Dorsolateral prefrontal cortex (tissue), 120 donors: ENCODE measurements at regions of chr19 and their contacts with region 1.

Region 1: GRCh38 chr19:51777570-51778462 is 16.8 kb downstream of the FPR2 start:
- DNase-seq: peak; percentile 37 to 67 (median 63)
- H3K4me3 ChIP-seq: peak overlapping the region in 23 of 59 donors; percentile 2 to 43 (median 29)
- H3K27ac ChIP-seq: peak overlapping the region in 1 of 59 donors; percentile 40
- H3K27me3 ChIP-seq: peaks cover 0 to 37% (median 9%) of the 10 kb centered on the region in 45 donors
- CTCF ChIP-seq: peak; percentile 54 to 93 (median 81)

Region 2: GRCh38 chr19:51422053-51422448 is 355.8 kb before region 1 on chr19:
- intact Hi-C with region 1: loop called in 1 of 2 experiments (anchors 5 kb)
- DNase-seq: peak; percentile 53 to 79 (median 64)
- H3K4me3 ChIP-seq: peak overlapping the region in 9 of 59 donors; percentile 19 to 41 (median 26)
- H3K27ac ChIP-seq: no peak overlapping the region
- H3K27me3 ChIP-seq: peaks cover 0 to 37% (median 7%) of the 10 kb centered on the region in 45 donors
- CTCF ChIP-seq: peak; percentile 61 to 100 (median 95)

Region 3: GRCh38 chr19:51473009-51473707 is 304.7 kb before region 1 on chr19:
- intact Hi-C with region 1: loop called in 1 of 2 experiments (anchors 5 kb)
- DNase-seq: peak; percentile 46 to 80 (median 66)
- H3K4me3 ChIP-seq: no peak overlapping the region
- H3K27ac ChIP-seq: no peak overlapping the region
- H3K27me3 ChIP-seq: peaks cover 0 to 44% (median 10%) of the 10 kb centered on the region in 45 donors
- CTCF ChIP-seq: peak; percentile 64 to 96 (median 90)

Region 4: GRCh38 chr19:51531349-51532315 is 246.2 kb before region 1 on chr19 and contains the start of gene SIGLEC6:
- intact Hi-C with region 1: no loop called
- DNase-seq: peak in 6 of 10 donors; percentile 33 to 66 (median 40)
- H3K4me3 ChIP-seq: no peak within 1 kb of the TSS
- H3K27ac ChIP-seq: no peak within 1 kb of the TSS
- H3K27me3 ChIP-seq: peaks cover 0 to 66% (median 23%) of the 10 kb centered on the region in 45 donors
- CTCF ChIP-seq: no peak
- total RNA-seq, gene SIGLEC6: 0.25 to 1.5 (median 0.62) TPM in 27 of 120 experiments, not detected in the others

Region 5: GRCh38 chr19:51593969-51594773 is 183.6 kb before region 1 on chr19:
- intact Hi-C with region 1: no loop called
- DNase-seq: peak; percentile 99 to 100 (median 99)
- H3K4me3 ChIP-seq: peak overlapping the region; percentile 50 to 98 (median 80)
- H3K27ac ChIP-seq: peak overlapping the region in 56 of 59 donors; percentile 23 to 96 (median 85)
- H3K27me3 ChIP-seq: peaks cover 0 to 8% (median 0%) of the 10 kb centered on the region in 45 donors
- CTCF ChIP-seq: peak in 31 of 56 donors; percentile 1 to 58 (median 34)

Region 6: GRCh38 chr19:51651216-51651846 is 126.5 kb before region 1 on chr19:
- intact Hi-C with region 1: loop called in 1 of 2 experiments (anchors 10 kb)
- DNase-seq: no peak
- H3K4me3 ChIP-seq: no peak overlapping the region
- H3K27ac ChIP-seq: peak overlapping the region in 1 of 59 donors; percentile 6
- H3K27me3 ChIP-seq: peaks cover 0 to 7% (median 0%) of the 10 kb centered on the region in 45 donors
- CTCF ChIP-seq: no peak

Region 7: DNA sequence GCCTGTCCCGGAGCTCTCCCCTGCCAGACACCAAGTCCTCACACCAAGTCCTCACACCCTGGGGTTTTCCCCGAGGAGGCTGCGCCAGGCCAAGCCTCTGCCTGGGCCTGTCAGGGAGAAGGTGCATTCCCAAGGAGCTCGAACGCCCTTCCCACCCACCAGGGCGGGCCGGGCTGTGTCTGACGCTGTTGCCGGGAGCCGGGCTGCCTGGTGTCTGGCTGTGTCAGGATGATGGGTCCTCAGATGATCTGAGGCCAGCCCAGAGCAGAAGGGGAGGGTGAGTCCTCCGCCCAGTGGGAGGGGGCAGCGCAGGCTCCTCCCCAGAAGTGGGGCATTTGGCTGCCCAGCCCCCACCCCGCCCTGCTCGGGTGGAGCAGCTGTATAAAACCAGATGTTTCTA is 51.8 kb before region 1 on chr19:
- intact Hi-C with region 1: loop called in 1 of 2 experiments (anchors 10 kb)
- DNase-seq: peak in 9 of 10 donors; percentile 53 to 85 (median 80)
- H3K4me3 ChIP-seq: peak overlapping the region in 30 of 59 donors; percentile 6 to 57 (median 32)
- H3K27ac ChIP-seq: peak overlapping the region in 58 of 59 donors; percentile 13 to 97 (median 82)
- H3K27me3 ChIP-seq: peaks cover 0 to 36% (median 0%) of the 10 kb centered on the region in 45 donors
- CTCF ChIP-seq: peak in 4 of 56 donors; percentile 11 to 21 (median 16)

Region 8: GRCh38 chr19:51873097-51873496 is 95.3 kb after region 1 on chr19:
- intact Hi-C with region 1: no loop called
- DNase-seq: no peak
- H3K4me3 ChIP-seq: no peak overlapping the region
- H3K27ac ChIP-seq: no peak overlapping the region
- H3K27me3 ChIP-seq: no peaks in the 10 kb centered on the region
- CTCF ChIP-seq: no peak

Region 9: DNA sequence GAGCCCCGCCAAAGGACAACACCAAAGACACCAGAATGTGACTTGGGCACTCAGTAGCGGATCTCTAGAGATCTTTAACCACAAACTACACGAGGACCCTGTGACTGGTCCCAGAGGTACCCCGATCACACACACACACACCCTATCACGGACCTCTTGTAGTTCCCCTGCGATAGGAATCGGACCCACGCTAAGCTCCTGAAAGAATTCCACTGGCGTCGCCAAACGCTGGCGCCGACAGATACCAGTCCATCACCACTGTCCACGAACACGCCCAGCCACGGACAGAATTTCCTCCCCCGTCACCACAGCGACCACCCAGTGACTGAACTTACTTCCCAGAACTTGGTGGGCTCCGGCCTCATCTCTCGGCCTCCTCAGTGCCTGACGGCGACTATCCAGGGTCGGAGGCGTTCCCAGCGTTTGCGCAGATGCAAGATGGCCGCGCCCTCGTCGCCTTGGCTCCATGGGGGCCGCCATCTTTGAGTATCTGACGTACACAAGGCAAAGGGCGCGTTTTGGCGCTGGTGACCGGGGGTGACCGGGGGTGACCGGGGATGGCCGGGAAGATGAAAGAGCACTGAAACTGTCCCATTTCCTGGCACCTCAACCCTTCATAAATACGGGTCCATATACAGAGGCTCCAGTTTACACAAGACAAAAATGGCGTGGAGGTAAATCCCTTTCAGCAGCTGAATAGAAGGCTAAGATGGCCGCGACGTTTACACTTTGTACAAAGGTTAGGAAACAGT is 230.2 kb after region 1 on chr19 and contains the start of gene ZNF615:
- intact Hi-C with region 1: no loop called
- DNase-seq: peak; percentile 87 to 95 (median 94)
- H3K4me3 ChIP-seq: peak within 1 kb of the TSS; percentile 41 to 96 (median 87)
- H3K27ac ChIP-seq: peak within 1 kb of the TSS; percentile 63 to 97 (median 90)
- H3K27me3 ChIP-seq: no peaks in the 10 kb centered on the region
- CTCF ChIP-seq: peak in 19 of 56 donors; percentile 3 to 47 (median 20)
- total RNA-seq, gene ZNF615: 15.5 to 29.9 (median 22.6) TPM